Activated naive CD4-positive, alpha-beta T cell treated with anti-CD3 and anti-CD28 coated beads for 36 hours (primary cell): ENCODE measurements at regions of chr2 and their contacts with region 1.

Region 1: DNA sequence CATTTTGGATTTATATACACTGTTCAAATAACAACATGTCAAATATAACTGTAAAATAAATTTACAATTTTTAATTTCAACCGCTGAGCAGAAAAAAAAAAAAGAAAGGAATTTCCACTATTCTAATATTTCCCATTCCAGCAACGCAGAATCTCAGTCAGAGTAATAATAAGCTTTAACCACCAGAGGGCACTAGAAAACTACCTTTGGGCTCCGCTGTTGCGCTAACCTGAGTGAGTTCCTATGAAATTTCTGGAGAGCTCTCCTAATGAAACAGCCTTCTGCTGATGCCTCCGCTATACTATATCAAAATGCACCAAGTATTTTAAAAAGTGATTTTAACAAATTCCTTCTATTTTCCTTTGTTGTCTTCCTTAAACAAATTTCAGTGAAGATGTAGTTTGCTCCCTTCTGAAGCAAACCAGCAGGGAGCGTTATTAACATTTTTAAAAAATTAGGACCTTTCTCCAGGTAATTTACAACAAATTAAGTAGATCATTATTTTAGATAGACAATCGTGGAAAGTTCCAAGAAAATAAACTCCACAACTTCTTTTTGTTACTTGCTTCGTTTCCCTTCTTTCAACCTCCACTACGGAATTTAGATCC is 23.0 kb downstream of the ERMN start:
- DNase-seq: peak; percentile 51
- H3K4me3 Mint-ChIP-seq: peak overlapping the region; percentile 3
- H3K27ac Mint-ChIP-seq: no peak overlapping the region
- H3K4me1 Mint-ChIP-seq: peaks cover 34% of the 10 kb centered on the region
- H3K27me3 Mint-ChIP-seq: no peaks in the 10 kb centered on the region

Region 2: GRCh38 chr2:157261199-157261783 is 41.3 kb before region 1 on chr2:
- CTCF ChIA-PET with region 1: interaction called, 14 read pairs
- intact Hi-C with region 1: no loop called
- DNase-seq: peak; percentile 83
- H3K4me3 Mint-ChIP-seq: no peak overlapping the region
- H3K27ac Mint-ChIP-seq: peak overlapping the region; percentile 2
- H3K4me1 Mint-ChIP-seq: peaks cover 25% of the 10 kb centered on the region
- H3K27me3 Mint-ChIP-seq: peaks cover 11% of the 10 kb centered on the region

Region 3: DNA sequence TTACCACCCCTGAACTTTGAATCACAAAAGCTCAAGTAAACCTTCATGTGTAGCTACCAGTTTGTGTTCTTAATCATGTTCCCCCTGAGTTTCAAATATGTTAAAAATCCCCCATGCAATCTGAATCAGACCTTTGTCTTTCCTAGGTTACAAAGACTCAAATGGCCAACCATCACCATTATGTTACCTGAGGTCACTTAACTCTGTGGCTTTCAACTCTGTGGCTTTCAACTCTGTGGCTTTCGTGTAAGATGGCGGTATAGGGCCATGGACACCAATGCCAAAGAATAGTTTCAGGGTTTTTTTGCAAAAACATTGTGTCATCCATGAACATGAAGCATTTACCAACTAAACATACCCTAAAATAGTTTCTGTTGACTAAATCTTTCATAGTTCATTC is 16.3 kb after region 1 on chr2:
- CTCF ChIA-PET with region 1: interaction called, 263 read pairs
- intact Hi-C with region 1: no loop called
- DNase-seq: no peak
- H3K4me3 Mint-ChIP-seq: no peak overlapping the region
- H3K27ac Mint-ChIP-seq: no peak overlapping the region
- H3K4me1 Mint-ChIP-seq: peaks cover 39% of the 10 kb centered on the region
- H3K27me3 Mint-ChIP-seq: no peaks in the 10 kb centered on the region

Region 4: DNA sequence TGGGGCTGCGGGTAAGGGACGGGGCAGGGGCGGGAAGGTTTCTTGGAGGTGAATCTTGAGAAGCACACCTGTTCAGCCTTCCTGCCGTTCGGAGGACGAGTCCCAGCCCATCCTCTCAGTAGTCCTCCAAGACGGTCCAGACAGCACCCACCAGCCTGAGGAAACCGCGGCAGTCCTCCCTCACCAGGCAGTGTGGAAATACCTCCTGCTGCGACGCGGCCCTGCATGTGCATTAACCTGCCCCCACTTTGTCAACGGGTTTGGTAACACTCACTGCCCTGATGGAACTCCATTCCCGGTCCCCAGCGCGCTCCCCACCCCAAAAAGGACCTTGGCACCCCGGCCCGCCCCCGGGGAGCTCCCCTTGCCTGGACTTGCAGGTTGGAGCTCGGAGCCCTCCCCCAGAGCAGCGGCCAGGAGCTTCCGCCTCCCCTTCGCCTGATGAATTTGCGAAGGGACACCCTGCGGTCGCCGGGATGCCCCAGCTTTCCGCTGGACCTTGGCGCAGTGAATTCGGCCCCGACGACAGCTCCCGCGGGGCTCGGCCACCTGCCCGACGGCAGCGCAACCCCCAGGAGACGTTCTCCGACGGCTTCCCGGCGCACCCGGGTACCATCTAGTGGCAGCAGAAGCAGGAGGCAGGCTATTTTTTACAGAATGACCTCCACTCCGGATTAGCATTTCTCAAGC is 294.5 kb after region 1 on chr2:
- CTCF ChIA-PET with region 1: interaction called, 95 read pairs
- intact Hi-C with region 1: loop called (anchors 1 kb)
- DNase-seq: peak; percentile 78
- H3K4me3 Mint-ChIP-seq: peak overlapping the region; percentile 71
- H3K27ac Mint-ChIP-seq: no peak overlapping the region
- H3K4me1 Mint-ChIP-seq: peaks cover 18% of the 10 kb centered on the region
- H3K27me3 Mint-ChIP-seq: no peaks in the 10 kb centered on the region

Region 5: DNA sequence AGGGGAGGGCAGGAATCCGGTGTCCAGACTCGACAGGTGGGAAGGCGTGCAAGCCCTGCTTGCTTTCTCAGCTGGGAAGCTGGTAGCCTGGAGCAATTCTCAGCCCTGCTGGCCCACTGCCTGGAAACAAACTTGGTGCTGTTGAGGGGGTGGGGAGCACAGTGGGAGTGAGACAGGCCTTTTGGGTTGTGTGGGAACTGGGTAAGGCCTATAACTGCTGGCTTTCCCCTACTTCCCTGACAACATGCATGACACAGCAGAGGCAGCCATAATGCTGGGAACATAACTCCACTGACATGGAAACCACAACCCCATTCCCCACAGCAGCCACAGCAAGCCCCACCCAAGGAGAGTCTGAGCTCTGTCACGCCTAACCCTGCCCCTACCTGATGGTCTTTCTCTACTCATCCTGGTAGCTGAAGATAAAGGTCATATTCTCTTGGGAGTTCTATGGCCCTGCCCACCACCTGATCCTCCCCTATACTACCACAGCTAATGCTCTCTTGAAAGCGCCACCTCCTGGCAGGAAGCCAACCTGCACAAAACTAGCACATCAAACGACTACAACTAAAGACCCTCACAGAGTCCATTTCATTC is 449.0 kb after region 1 on chr2:
- CTCF ChIA-PET with region 1: interaction called, 3 read pairs
- intact Hi-C with region 1: loop called (anchors 2 kb)
- DNase-seq: peak; percentile 51
- H3K4me3 Mint-ChIP-seq: no peak overlapping the region
- H3K27ac Mint-ChIP-seq: no peak overlapping the region
- H3K4me1 Mint-ChIP-seq: peaks cover 4% of the 10 kb centered on the region
- H3K27me3 Mint-ChIP-seq: no peaks in the 10 kb centered on the region

Region 6: DNA sequence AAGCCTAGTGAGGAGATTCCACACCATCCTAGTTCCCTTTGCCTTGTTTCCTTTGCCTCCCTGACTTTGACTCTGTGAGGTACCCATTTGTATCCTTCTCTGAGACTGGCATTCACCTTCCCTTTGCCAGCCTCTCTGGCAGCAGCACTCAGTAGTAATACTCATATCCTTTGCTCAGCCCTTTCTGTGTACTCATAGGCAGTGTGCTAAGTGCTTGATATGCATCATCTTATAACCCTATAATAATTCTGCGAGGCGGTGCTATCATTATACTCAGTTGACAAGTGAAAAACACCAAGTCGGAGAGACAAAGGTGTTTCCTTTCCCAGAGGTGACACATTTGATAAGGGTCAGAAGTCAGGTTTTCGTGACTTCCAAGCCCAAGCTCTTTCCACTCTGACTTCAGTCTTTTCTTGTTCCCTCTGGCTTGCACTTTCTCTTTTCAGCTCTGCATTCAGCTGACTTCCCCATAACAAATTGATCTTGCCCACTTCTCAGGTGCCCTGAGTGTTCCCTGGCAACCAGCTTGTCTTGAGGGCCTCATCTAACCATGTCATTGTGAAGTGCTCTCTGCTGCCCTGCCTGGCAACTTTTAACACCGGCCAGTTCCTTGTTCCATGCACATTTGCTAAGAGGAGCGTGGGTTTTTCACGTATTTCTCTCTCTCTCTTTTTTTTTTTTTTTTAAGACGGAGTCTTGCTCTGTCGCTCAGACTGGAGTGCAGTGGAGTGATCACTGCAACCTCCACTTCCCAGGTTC is 704.5 kb after region 1 on chr2:
- CTCF ChIA-PET with region 1: interaction called, 15 read pairs
- intact Hi-C with region 1: loop called (anchors 1 kb)
- DNase-seq: peak; percentile 35
- H3K4me3 Mint-ChIP-seq: no peak overlapping the region
- H3K27ac Mint-ChIP-seq: no peak overlapping the region
- H3K4me1 Mint-ChIP-seq: peaks cover 15% of the 10 kb centered on the region
- H3K27me3 Mint-ChIP-seq: no peaks in the 10 kb centered on the region